RWPE1 (cell line): ENCODE measurements at regions of chr15 and their contacts with region 1.

Region 1: GRCh38 chr15:65184868-65185738 is at the start of gene CLPX:
- DNase-seq: peak; percentile 97
- H3K27ac ChIP-seq: peak within 1 kb of the TSS; percentile 90
- CTCF ChIP-seq: no peak

Region 2: GRCh38 chr15:64748251-64748650 is 436.9 kb before region 1 on chr15:
- CTCF ChIA-PET with region 1: no interaction called
- POLR2A ChIA-PET with region 1: interaction called, 12 read pairs
- DNase-seq: no peak
- H3K27ac ChIP-seq: no peak overlapping the region
- CTCF ChIP-seq: no peak

Region 3: DNA sequence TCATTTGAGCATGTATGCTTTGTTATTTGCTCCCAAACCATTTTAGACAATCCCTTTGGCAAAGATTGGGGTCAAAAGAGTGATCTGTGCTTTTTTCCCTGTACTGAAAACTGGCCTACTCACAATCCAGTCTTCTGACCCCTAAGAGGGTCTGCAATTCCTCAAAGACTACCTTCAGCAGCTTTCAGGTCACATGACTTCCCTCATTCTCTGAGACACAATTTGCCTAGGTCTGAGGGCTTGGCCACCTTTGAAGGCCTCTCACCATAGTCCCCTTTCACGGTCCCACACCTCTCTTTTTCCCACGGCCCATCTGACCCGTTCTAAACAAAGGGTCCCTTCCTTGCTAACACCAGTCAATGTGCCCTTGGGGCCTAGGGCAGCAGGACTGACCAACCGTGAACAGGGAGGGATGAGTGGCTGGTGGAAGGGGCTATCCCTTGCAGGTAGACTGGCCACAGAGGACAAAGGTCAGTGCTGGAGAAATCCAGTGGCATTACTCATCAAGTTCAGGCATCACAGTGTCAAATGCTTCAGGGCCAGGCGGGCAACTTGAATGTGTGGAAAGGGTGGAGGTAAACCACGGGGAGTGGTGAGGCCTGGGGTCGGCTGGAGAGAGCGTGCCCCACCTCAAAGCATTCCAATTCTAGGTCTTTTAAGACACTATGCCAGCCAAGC is 128.1 kb before region 1 on chr15:
- CTCF ChIA-PET with region 1: no interaction called
- POLR2A ChIA-PET with region 1: no interaction called
- DNase-seq: peak; percentile 25
- H3K27ac ChIP-seq: no peak overlapping the region
- CTCF ChIP-seq: no peak

Region 4: DNA sequence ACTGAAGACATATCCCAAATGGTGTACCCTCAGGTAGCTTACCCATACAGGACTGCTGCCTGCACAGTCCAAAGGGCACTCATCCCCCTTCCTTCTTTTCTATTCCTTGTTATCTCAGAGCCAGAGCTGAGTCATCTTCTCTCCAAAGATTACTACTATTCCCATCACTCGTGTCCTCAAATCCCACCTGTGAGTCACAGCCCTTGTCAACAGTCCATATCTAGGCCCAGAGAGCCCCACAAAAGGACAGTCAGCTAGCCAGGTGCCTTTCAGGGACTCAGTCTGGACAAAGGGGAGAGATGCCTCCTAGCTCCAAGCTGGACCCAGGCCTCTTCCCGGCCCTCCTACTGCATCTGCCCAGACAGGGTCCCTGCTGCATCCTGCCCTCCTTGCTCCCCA is 90.6 kb after region 1 on chr15:
- CTCF ChIA-PET with region 1: interaction called, 19 read pairs
- POLR2A ChIA-PET with region 1: no interaction called
- DNase-seq: no peak
- H3K27ac ChIP-seq: 0 out of 2 replicates have a peak overlapping the region, but pooled peaks have one; percentile 7
- CTCF ChIP-seq: no peak